Calu3 (cell line): ENCODE measurements at regions of chr22 and their contacts with region 1.

Region 1: GRCh38 chr22:45096256-45096907 is 67.3 kb upstream of the NUP50 start:
- DNase-seq: peak; percentile 72
- H3K4me3 Mint-ChIP-seq: no peak overlapping the region
- H3K27ac Mint-ChIP-seq: no peak overlapping the region
- H3K4me1 Mint-ChIP-seq: no peaks in the 10 kb centered on the region
- H3K27me3 Mint-ChIP-seq: peaks cover 91% of the 10 kb centered on the region
- CTCF ChIP-seq: peak; percentile 72

Region 2: DNA sequence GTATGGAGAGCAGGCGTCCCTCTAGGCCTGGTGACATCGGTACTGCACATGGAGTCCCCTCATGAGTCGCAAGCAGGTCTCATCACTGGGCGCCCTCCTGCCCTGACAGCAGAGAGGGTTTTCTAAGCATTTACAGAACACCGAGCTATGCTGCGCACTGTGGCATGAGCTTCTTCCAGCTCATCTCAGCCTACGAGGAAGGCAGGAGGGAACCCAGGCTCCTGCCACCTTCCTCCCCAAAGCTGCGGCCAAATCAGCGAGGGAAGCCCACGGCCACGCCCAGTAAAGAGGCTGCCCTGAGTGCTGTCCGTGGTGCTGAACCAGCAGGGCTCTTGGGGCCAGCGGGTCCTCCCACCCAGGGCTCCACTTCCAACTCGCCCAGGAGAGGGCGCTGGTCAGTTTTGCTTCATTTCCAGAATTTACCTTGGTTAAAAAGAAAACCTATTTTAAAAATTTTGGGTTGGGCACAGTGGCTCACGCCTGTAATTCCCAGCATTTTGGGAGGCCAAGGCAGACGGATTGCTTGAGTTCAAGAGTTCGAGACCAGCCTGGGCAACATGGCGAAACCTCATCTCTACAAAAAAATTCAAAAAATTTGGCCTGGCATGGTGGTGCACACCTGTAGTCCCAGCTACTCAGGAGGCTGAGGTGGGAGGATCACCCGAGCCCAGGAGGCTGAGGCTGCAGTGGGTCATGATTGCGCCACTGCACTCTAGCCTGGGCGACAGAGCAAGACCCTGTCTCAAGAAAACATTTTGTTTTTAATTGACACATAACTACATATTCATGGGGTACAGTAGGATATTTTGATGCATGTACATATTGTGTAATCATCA is 120.7 kb before region 1 on chr22:
- CTCF ChIA-PET with region 1: interaction called, 4 read pairs
- intact Hi-C with region 1: loop called (anchors 10 kb)
- DNase-seq: peak; percentile 87
- H3K4me3 Mint-ChIP-seq: no peak overlapping the region
- H3K27ac Mint-ChIP-seq: no peak overlapping the region
- H3K4me1 Mint-ChIP-seq: no peaks in the 10 kb centered on the region
- H3K27me3 Mint-ChIP-seq: peaks cover 96% of the 10 kb centered on the region
- CTCF ChIP-seq: peak; percentile 91

Region 3: GRCh38 chr22:45139689-45140088 is 43.3 kb after region 1 on chr22:
- CTCF ChIA-PET with region 1: no interaction called
- intact Hi-C with region 1: no loop called
- DNase-seq: no peak
- H3K4me3 Mint-ChIP-seq: no peak overlapping the region
- H3K27ac Mint-ChIP-seq: no peak overlapping the region
- H3K4me1 Mint-ChIP-seq: peaks cover 6% of the 10 kb centered on the region
- H3K27me3 Mint-ChIP-seq: no peaks in the 10 kb centered on the region
- CTCF ChIP-seq: no peak